ENCODE measurements at regions of chr1 and their contacts with region 1.

Region 1: DNA sequence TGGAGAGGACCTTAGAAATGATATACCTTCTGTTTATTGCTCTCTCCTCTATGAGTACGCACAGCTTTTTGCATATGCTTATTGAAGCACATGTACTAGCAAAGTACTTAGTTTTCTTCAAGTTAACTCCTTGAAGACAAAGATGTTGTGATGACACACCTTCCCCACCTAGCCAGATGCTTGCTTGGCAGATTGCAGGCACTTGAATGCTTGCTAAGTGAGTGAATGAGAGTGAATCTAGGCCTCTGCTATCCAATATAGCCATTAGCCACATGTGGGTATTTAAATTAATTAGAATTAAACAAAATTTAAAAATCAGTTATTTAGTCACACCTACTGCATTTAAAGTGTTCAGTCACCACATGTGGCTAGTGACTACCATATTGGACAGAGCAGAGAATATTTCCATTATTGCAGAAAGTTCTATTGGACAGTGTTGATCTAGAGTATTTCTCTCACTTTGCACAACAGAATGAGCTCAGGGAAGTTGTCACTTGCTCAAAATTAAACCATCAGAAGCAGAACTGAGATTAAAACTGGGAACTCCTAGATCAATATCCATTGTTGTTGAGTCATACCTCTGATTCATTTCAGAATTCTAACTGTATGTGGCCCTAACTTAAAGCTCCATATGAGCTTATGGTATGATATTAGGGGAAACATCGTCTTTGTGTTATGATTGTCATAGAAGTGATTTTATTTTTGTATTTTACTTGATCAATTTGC is 8.6 kb upstream of the EEIG2 start:
- DNase-seq: no peak
- H3K4me3 Mint-ChIP-seq: no peak overlapping the region
- H3K27ac Mint-ChIP-seq: no peak overlapping the region
- H3K4me1 Mint-ChIP-seq: peaks cover 24% of the 10 kb centered on the region
- H3K27me3 Mint-ChIP-seq: peaks cover 11% of the 10 kb centered on the region

Region 2: DNA sequence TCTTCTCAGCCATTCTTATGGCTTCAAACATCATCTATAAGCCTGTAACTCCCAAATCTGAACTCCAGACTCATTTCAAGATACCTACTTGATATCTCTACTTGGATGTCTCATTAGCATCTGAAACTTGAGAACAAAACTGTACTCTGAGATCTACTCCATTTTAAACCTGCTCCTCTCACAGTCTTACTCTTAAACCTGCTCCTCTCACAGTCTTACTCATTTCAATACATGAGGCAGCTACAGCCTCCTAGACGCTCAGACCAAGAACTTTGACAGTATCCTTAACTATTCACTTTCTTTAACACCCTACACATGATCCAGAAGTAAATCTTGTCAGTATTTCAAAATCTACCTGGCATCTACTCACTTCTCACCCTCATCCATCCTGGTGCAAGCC is 46.9 kb before region 1 on chr1:
- intact Hi-C with region 1: loop called (anchors 1 kb)
- DNase-seq: no peak
- H3K4me3 Mint-ChIP-seq: no peak overlapping the region
- H3K27ac Mint-ChIP-seq: no peak overlapping the region
- H3K4me1 Mint-ChIP-seq: peaks cover 2% of the 10 kb centered on the region
- H3K27me3 Mint-ChIP-seq: peaks cover 38% of the 10 kb centered on the region

Measured in activated T-helper 2 cell treated with anti-CD3 and anti-CD28 coated beads, Interferon-gamma antibody, Interleukin-2, Interleukin-4, amounts not matched to agents 10 μg/mL and 5 μg/mL and 100 μg/mL, durations not matched to agents 14 hours and 24 hours and 36 hours (primary cell).